GM12878 (cell line): ENCODE measurements at regions of chr3 and their contacts with region 1.

Region 1: DNA sequence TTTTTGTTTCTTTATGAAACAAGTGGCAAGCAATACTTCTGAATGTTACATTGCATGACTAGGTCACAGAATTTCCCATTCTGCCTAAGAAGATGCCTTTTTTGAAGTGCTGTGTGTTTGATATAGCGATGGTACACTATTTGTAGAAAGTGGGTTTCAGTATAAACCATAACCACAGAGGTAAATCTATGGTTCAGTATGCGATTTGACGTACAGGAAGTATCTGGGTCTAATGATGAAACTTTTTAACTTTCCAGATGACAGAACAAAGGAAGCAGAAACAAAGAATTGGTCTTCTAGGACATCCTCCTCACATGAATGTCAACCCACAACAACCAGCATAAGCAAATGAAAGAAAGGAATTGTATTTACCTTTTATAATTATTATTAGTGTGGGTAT is 133.4 kb upstream of the BHLHE40 start:
- DNase-seq: peak; percentile 89
- ATAC-seq: peak; percentile 75
- H3K4me3 ChIP-seq: no peak overlapping the region
- H3K27ac ChIP-seq: peak overlapping the region; percentile 74
- H3K4me1 ChIP-seq: peaks cover 45% of the 10 kb centered on the region
- H3K27me3 ChIP-seq: no peaks in the 10 kb centered on the region
- CTCF ChIP-seq: no peak
- EP300 ChIP-seq: peak; percentile 98 to 99
- POLR2A ChIP-seq: no peak
- RAD21 ChIP-seq: no peak

Region 2: DNA sequence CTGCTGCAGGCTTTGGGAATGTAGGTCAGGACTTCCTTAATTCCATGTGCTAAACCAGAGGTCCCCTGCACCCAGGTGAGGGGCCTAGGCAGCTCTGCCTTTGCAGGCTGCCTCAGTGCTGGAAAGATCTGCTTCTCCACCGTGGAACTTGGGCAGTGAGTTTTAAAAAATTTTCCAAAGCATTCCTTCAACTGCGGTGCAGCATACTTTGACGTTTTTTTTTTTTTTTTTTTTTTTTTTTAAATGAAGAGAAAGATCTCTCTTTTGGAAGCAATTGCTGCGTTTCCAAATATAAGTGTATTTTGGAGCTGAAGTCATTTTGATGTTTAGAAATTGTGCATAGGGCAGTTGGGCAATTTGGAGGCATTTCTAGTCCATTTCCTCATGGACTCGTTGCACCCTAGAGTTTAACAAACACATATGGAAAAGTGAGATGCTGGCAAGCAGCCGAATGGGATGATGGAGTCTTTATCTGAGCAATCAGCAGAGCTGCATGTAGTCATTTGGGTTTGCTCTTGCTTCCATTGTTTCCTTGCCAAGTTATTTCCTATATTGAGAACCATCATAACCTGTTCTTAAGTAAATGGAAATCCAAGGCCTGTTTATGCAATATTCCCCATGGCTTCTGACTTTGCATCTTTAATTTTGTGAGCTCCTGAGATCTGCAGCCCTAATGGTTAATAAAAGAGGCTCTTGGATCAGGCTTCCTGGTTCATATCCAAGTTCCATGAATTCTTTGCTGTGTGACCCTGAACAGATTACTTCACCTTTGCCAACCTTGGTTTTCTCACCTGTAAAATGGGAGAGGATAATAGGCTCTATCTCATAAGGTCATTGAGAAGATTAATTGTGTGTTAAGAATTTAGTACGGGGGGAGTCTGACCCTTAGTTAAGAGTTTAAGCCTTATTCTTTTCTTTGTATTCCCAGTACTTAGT is 321.5 kb before region 1 on chr3:
- CTCF ChIA-PET with region 1: no interaction called
- POLR2A ChIA-PET with region 1: no interaction called
- RAD21 ChIA-PET with region 1: no interaction called
- SMC1A ChIA-PET with region 1: no interaction called
- in situ Hi-C with region 1: no loop called
- intact Hi-C with region 1: no loop called
- DNase-seq: no peak
- ATAC-seq: no peak
- H3K4me3 ChIP-seq: no peak overlapping the region
- H3K27ac ChIP-seq: no peak overlapping the region
- H3K4me1 ChIP-seq: no peaks in the 10 kb centered on the region; the same call in 1 of the 2 replicates
- H3K27me3 ChIP-seq: no peaks in the 10 kb centered on the region
- CTCF ChIP-seq: no peak
- EP300 ChIP-seq: no peak
- POLR2A ChIP-seq: no peak
- RAD21 ChIP-seq: no peak

Region 3: DNA sequence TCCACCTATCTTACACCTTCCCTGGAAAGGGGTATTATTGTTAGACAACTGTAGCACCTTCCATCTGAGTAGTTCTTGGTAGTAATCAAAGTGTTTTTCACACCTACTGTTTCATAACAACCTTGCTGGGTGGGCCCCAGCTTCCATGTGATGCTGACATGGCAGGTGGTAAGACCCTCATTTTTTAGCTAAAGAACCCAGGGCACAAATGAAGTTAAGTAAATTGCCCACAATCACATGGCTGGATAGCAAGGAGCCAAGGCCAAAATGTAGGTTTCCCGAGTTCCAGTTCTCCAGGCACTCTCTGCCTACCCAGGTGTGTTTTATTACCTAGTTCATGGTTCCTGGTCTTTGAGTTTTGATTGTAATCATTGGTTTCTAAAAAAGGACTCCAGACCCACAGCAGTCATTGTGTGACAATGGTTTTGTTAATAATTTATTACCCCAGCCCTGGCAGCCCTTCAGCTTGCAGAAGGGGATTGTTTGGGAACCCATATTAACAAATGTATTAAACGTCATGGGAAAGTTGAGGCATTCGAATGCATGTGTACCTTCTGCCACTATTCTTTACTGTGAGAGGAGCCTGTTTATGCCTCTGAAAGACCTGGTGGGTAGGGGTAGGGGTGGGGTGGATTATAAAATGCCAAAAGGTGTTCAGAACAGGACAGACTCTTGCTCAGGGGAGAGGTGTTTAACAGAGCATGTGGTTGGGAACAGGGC is 88.9 kb before region 1 on chr3:
- CTCF ChIA-PET with region 1: interaction called, 5 read pairs
- POLR2A ChIA-PET with region 1: interaction called, 13 read pairs
- RAD21 ChIA-PET with region 1: interaction called, 21 read pairs
- SMC1A ChIA-PET with region 1: interaction called, 21 read pairs
- in situ Hi-C with region 1: no loop called
- intact Hi-C with region 1: loop called (anchors 1 kb)
- DNase-seq: no peak
- ATAC-seq: peak; percentile 12
- H3K4me3 ChIP-seq: no peak overlapping the region
- H3K27ac ChIP-seq: peak overlapping the region; percentile 33
- H3K4me1 ChIP-seq: peaks cover 55% of the 10 kb centered on the region
- H3K27me3 ChIP-seq: no peaks in the 10 kb centered on the region
- CTCF ChIP-seq: no peak
- EP300 ChIP-seq: peak in 1 of 2 experiments; percentile 37; a peak in 2 of 4 replicates
- POLR2A ChIP-seq: no peak
- RAD21 ChIP-seq: no peak

Region 4: DNA sequence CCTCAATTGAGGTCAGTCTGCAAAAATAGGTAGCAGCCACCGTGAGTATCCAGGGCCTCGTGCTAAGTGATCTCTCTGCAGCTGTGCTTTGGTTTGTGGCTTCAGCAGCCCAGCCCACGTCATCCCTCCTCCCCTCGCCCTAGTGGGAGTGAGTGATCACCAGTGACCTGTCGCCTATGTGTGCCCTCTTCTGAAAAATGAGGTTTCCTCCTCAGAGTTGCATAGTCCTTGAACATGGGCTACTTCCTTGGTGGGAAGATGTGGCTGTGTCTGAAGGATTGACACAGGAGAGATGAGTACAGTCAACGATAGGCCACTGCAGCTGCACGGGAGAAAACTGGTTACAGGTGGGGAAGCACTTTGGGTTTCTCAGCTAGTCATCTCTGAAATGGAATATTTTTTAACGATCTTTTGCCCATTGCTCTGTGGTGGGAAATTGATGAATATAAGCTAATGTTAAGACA is 11.4 kb before region 1 on chr3:
- CTCF ChIA-PET with region 1: interaction called, 7 read pairs
- POLR2A ChIA-PET with region 1: interaction called, 27 read pairs
- RAD21 ChIA-PET with region 1: interaction called, 70 read pairs
- SMC1A ChIA-PET with region 1: interaction called, 185 read pairs
- in situ Hi-C with region 1: no loop called
- intact Hi-C with region 1: loop called (anchors 1 kb)
- DNase-seq: no peak
- ATAC-seq: peak; percentile 63
- H3K4me3 ChIP-seq: no peak overlapping the region
- H3K27ac ChIP-seq: peak overlapping the region; percentile 43; the same call in 1 of the 2 replicates
- H3K4me1 ChIP-seq: peaks cover 43% of the 10 kb centered on the region
- H3K27me3 ChIP-seq: no peaks in the 10 kb centered on the region
- CTCF ChIP-seq: no peak
- EP300 ChIP-seq: peak; percentile 89 to 95; a peak in 3 of 4 replicates
- POLR2A ChIP-seq: no peak
- RAD21 ChIP-seq: 0 out of 2 replicates have a peak, but pooled peaks have one; percentile 4

Region 5: DNA sequence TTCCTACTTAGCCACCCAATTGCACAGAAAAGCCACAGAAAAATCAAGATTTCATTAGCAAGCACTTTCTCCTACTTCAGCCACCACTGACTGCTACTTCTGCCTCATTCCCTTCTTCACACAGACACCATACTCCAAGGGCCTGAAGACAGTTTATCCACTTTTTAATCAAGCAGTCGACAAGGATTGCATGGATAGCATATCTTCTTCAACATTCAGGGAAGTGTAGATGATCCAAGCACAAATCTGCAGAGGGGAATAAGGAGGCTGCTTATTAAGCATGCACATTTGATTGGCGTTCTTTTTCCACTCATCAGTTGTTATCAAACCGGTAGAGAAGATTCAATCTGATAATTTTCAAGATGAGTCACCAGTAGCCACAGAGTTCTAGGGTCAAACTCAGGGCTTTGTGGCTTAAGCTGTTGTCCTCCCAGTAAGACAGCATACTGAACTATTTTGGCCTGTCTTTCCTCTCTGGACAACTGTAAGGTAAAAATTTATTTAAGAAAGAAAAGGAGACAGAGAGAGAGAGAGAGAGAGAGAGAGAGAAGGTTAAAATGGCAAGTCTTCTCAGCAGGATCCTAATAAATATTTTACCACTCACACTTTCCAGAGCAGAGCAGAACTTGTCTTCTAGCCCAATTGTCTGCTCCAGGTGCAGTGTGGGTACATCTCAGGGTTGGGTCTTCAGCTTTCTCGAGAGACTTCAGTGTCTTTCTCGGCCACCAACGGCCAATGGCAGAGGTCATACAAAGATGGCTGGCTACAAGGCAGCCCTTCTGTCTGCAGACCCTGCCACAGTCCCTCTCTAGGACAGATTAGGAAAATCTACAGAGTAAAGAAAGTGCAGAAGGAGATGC is 52.8 kb after region 1 on chr3:
- CTCF ChIA-PET with region 1: no interaction called
- POLR2A ChIA-PET with region 1: interaction called, 3 read pairs
- RAD21 ChIA-PET with region 1: interaction called, 3 read pairs
- SMC1A ChIA-PET with region 1: interaction called, 7 read pairs
- in situ Hi-C with region 1: no loop called
- intact Hi-C with region 1: loop called (anchors 2 kb)
- DNase-seq: peak; percentile 53
- ATAC-seq: peak; percentile 97
- H3K4me3 ChIP-seq: no peak overlapping the region; the same call in 1 of the 2 replicates
- H3K27ac ChIP-seq: peak overlapping the region; percentile 28
- H3K4me1 ChIP-seq: peaks cover 16% of the 10 kb centered on the region
- H3K27me3 ChIP-seq: no peaks in the 10 kb centered on the region
- CTCF ChIP-seq: no peak
- EP300 ChIP-seq: peak; percentile 69 to 91; a peak in 3 of 4 replicates
- POLR2A ChIP-seq: no peak
- RAD21 ChIP-seq: no peak

Region 6: DNA sequence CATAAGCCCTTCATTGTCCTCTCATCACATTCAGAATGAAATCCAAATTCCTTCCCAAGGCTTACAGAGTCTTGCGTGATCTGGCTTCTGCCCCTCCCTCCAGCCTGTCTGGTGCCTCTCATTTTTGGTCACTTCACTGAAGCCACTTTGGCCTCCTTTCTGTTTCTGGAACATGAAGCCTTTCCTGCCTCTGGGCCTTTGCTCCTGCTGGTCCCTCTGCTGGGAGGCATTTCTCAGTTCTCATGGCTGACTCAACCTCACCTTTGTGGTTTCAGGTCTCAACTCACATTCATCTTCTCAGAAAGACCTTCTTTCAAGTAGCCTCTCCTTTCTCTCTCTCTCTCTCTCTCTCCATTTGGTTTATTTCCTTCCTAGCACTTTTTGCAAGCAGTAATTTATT is 89.5 kb after region 1 on chr3:
- CTCF ChIA-PET with region 1: interaction called, 3 read pairs
- POLR2A ChIA-PET with region 1: no interaction called
- RAD21 ChIA-PET with region 1: no interaction called
- SMC1A ChIA-PET with region 1: no interaction called
- in situ Hi-C with region 1: no loop called
- intact Hi-C with region 1: loop called (anchors 2 kb)
- DNase-seq: no peak
- ATAC-seq: peak; percentile 80
- H3K4me3 ChIP-seq: no peak overlapping the region
- H3K27ac ChIP-seq: no peak overlapping the region
- H3K4me1 ChIP-seq: peaks cover 14% of the 10 kb centered on the region; the same call in 1 of the 2 replicates
- H3K27me3 ChIP-seq: no peaks in the 10 kb centered on the region
- CTCF ChIP-seq: no peak
- EP300 ChIP-seq: no peak
- POLR2A ChIP-seq: no peak
- RAD21 ChIP-seq: 0 out of 2 replicates have a peak, but pooled peaks have one; percentile 14

Region 7: GRCh38 chr3:5026331-5027218 is 180.7 kb after region 1 on chr3:
- CTCF ChIA-PET with region 1: interaction called, 3 read pairs
- POLR2A ChIA-PET with region 1: no interaction called
- RAD21 ChIA-PET with region 1: interaction called, 5 read pairs
- SMC1A ChIA-PET with region 1: interaction called, 6 read pairs
- in situ Hi-C with region 1: no loop called
- intact Hi-C with region 1: loop called (anchors 1 kb)
- DNase-seq: no peak
- ATAC-seq: peak; percentile 83
- H3K4me3 ChIP-seq: peak overlapping the region; percentile 61; the same call in 1 of the 2 replicates
- H3K27ac ChIP-seq: peak overlapping the region; percentile 68
- H3K4me1 ChIP-seq: peaks cover 31% of the 10 kb centered on the region
- H3K27me3 ChIP-seq: no peaks in the 10 kb centered on the region
- CTCF ChIP-seq: peak; percentile 63 to 72 (median 71)
- EP300 ChIP-seq: no peak; a peak in 1 of 4 replicates
- POLR2A ChIP-seq: 0 out of 2 replicates have a peak, but pooled peaks have one; percentile 31
- RAD21 ChIP-seq: peak; percentile 86

Region 8: DNA sequence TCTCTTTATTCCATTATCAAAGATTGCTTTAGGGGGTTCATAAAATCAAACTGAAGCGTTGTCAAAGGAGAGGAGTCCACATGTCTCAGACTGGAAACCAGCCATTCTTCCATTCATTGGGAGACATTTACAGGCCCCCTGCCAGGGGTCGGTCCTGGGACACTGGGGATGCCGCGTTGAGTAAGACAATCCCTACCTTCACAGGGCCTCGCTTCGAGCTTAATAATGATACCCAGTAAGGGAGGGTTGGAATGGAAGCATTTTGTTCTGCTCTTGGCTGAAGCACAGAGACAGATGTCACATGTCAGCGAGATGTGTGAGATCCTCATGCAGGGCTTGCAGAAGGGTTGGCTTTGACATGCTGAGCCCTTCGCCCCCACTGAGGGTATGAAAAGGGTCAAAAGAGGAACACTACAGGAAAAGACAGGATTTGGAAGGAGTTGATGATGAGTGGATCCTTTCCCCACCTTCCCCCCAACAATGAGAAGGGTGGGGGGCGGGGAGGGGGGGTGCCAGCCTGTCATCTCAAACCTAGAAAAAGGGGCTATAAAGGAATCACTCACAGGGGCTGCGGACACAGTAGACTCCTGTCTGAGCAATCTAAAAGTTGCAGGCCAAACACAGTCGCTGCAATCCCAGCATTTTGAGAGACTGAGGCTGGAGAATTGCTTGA is 250.6 kb after region 1 on chr3:
- CTCF ChIA-PET with region 1: no interaction called
- POLR2A ChIA-PET with region 1: no interaction called
- RAD21 ChIA-PET with region 1: no interaction called
- SMC1A ChIA-PET with region 1: no interaction called
- in situ Hi-C with region 1: no loop called
- intact Hi-C with region 1: no loop called
- DNase-seq: no peak
- ATAC-seq: no peak
- H3K4me3 ChIP-seq: no peak overlapping the region
- H3K27ac ChIP-seq: no peak overlapping the region
- H3K4me1 ChIP-seq: no peaks in the 10 kb centered on the region
- H3K27me3 ChIP-seq: peaks cover 4 to 5% of the 10 kb centered on the region in 2 experiments; a peak in 3 of 4 replicates
- CTCF ChIP-seq: no peak
- EP300 ChIP-seq: no peak
- POLR2A ChIP-seq: no peak
- RAD21 ChIP-seq: no peak

Region 9: DNA sequence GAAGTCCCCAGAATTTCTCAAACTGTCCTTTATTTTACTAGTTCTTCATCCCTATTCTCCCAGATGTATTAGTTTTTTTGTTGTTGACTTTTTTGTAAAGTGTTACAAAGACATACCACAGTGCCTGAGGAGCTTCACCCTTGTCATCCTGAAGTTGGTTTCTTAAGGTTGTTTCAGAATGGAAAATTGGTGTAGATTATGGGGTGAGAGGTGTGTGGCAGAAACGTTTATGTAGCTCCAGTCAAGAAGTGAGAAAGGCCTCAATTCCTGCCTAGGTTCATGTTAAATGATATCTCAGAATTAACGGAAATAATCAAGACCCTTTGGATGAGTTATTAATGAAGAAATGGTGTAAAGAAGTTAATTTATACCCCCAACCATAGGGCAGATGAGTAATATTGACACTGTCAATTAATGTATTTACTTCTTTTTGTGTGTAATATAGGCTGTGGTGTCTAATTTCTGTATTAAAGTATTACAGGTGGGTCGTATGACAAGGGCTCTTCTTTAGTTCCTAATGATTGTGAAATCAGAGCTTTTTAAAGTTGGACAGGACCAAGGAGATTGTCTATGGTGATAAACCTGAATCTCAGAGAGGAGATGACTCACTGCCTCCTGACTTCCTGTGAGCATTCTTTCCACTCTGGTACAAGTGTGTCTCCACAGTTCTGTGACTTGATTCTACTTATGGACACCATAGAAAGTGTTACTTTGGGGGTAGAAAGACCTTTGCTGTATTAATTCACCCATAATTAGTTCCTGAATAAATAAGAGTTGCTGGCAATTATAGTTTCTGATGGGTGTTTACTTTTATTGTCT is 348.7 kb after region 1 on chr3:
- CTCF ChIA-PET with region 1: no interaction called
- POLR2A ChIA-PET with region 1: no interaction called
- RAD21 ChIA-PET with region 1: no interaction called
- SMC1A ChIA-PET with region 1: no interaction called
- in situ Hi-C with region 1: no loop called
- intact Hi-C with region 1: loop called (anchors 5 kb)
- DNase-seq: no peak
- ATAC-seq: peak; percentile 49
- H3K4me3 ChIP-seq: peak overlapping the region; percentile 39; the same call in 1 of the 2 replicates
- H3K27ac ChIP-seq: peak overlapping the region; percentile 94
- H3K4me1 ChIP-seq: peaks cover 57% of the 10 kb centered on the region
- H3K27me3 ChIP-seq: no peaks in the 10 kb centered on the region
- CTCF ChIP-seq: no peak
- EP300 ChIP-seq: no peak
- POLR2A ChIP-seq: peak; percentile 20; the same call in 1 of the 2 replicates
- RAD21 ChIP-seq: no peak